GM13977 (cell line): ENCODE measurements at regions of chr21 and their contacts with region 1.

Region 1: GRCh38 chr21:31580866-31581276 is 78.6 kb upstream of the SOD1 start:
- DNase-seq: peak; percentile 70
- CTCF ChIP-seq: peak; percentile 87

Region 2: GRCh38 chr21:31198575-31198974 is 382.3 kb before region 1 on chr21:
- in situ Hi-C with region 1: loop called (anchors 10 kb)
- DNase-seq: peak; percentile 34
- CTCF ChIP-seq: peak; percentile 38